HCT116 (cell line): ENCODE measurements at regions of chr13 and their contacts with region 1.

Region 1: DNA sequence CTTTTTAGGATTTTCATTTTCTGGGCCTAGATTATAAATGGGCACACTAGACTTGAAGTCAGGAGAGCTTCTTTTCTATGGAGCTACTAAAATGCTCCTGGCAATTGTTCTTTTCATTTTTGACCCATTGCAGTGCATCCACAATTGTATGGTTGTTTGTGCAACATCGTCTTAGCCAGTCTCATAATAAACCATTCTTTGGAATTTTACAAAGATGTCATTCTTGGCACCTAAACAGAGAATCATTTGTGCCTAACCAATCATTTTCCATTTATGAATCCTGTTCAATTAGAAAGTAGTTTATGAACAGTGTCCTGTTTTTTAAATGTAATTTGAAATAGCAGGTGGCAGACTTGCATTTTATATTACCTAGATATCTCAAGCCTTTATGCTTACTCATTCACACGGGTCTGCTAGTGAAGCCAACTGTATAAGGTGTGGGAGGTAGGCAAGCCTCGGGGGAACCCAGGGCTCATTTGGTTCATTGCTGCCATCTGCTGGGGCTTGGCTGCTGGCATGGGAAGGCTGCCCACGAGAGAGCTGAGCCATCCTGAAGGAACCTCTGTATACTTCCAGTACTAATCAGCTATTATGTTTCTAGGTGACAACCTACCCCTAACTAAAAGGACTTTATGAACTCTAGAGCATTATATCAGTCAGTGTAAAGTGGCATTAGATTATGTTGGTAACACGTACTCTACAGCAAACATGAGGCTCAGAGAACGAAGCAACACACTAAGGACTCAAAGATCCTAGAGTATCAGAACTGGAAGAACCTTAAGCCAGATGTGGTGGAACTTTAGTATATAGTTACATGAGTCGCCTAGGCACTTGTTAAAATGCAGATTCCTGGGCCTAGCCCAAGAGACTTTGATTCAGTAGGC is 60.0 kb downstream of the TPT1 start:
- DNase-seq: peak; percentile 79
- ATAC-seq: peak; percentile 97
- H3K4me3 ChIP-seq: no peak overlapping the region
- H3K27ac ChIP-seq: peak overlapping the region; percentile 58
- H3K4me1 ChIP-seq: peaks cover 46 to 58% of the 10 kb centered on the region in 2 experiments
- H3K27me3 ChIP-seq: no peaks in the 10 kb centered on the region
- CTCF ChIP-seq: peak; percentile 79 to 94 (median 92); a peak in 5 of 6 replicates
- POLR2A ChIP-seq: no peak
- RAD21 ChIP-seq: peak; percentile 98

Region 2: GRCh38 chr13:45047394-45048310 is 233.3 kb before region 1 on chr13:
- CTCF ChIA-PET with region 1: interaction called, 55 read pairs
- POLR2A ChIA-PET with region 1: interaction called, 3 read pairs
- RAD21 ChIA-PET with region 1: interaction called, 10 to 13 read pairs
- intact Hi-C with region 1: loop called (anchors 1 kb)
- DNase-seq: peak; percentile 68
- ATAC-seq: peak; percentile 95
- H3K4me3 ChIP-seq: no peak overlapping the region
- H3K27ac ChIP-seq: no peak overlapping the region
- H3K4me1 ChIP-seq: peaks cover 0 to 4% of the 10 kb centered on the region in 2 experiments; a peak in 1 of 4 replicates
- H3K27me3 ChIP-seq: no peaks in the 10 kb centered on the region
- CTCF ChIP-seq: peak; percentile 87 to 95 (median 94)
- POLR2A ChIP-seq: no peak
- RAD21 ChIP-seq: peak; percentile 98

Region 3: DNA sequence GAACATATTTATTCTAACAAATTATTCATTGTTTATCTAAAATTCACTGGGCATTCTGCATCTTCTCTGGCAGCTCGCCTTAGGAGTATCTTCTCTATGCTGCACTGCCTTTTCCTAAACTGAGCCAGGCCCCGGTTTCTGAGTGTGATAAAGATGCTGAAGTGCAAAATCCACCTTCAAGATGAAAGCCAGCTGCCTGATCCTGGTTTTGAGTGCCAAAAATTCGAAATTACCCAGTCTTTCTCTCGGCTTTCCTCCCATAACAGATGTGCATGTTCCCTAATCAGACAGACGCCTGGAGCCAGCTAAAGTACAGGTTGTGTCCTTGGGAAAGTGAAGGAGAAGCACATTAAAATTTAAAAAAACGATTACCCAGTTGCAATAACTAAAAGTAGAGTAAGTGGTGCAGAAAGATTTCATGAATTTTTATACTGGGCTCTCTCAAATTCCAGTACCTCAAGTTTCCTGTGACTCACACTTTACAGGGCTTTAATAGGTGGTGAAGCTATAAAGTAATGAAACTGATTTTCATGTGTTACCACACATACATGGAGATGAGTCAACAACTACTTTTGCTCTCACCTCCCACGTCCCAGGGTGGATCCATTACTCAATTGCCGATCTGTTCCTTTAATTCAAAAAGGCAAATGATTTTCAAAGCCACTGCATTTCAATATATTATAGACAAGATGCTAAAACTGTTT is 225.6 kb before region 1 on chr13:
- CTCF ChIA-PET with region 1: interaction called, 23 read pairs
- POLR2A ChIA-PET with region 1: interaction called, 3 read pairs
- RAD21 ChIA-PET with region 1: interaction called, 3 to 8 read pairs
- intact Hi-C with region 1: loop called (anchors 2 kb)
- DNase-seq: peak; percentile 70
- ATAC-seq: peak; percentile 81
- H3K4me3 ChIP-seq: peak overlapping the region in 1 of 2 experiments; percentile 33; a peak in 3 of 4 replicates
- H3K27ac ChIP-seq: peak overlapping the region; percentile 69
- H3K4me1 ChIP-seq: peaks cover 18 to 44% of the 10 kb centered on the region in 2 experiments
- H3K27me3 ChIP-seq: no peaks in the 10 kb centered on the region
- CTCF ChIP-seq: no peak
- POLR2A ChIP-seq: no peak
- RAD21 ChIP-seq: 0 out of 2 replicates have a peak, but pooled peaks have one; percentile 23

Region 4: GRCh38 chr13:45109102-45109720 is 171.8 kb before region 1 on chr13:
- CTCF ChIA-PET with region 1: no interaction called
- POLR2A ChIA-PET with region 1: no interaction called
- RAD21 ChIA-PET with region 1: no interaction called
- intact Hi-C with region 1: no loop called
- DNase-seq: no peak
- ATAC-seq: peak; percentile 47; the same call in 1 of the 2 replicates
- H3K4me3 ChIP-seq: no peak overlapping the region
- H3K27ac ChIP-seq: no peak overlapping the region
- H3K4me1 ChIP-seq: no peaks in the 10 kb centered on the region
- H3K27me3 ChIP-seq: no peaks in the 10 kb centered on the region
- CTCF ChIP-seq: no peak
- POLR2A ChIP-seq: no peak
- RAD21 ChIP-seq: no peak

Region 5: DNA sequence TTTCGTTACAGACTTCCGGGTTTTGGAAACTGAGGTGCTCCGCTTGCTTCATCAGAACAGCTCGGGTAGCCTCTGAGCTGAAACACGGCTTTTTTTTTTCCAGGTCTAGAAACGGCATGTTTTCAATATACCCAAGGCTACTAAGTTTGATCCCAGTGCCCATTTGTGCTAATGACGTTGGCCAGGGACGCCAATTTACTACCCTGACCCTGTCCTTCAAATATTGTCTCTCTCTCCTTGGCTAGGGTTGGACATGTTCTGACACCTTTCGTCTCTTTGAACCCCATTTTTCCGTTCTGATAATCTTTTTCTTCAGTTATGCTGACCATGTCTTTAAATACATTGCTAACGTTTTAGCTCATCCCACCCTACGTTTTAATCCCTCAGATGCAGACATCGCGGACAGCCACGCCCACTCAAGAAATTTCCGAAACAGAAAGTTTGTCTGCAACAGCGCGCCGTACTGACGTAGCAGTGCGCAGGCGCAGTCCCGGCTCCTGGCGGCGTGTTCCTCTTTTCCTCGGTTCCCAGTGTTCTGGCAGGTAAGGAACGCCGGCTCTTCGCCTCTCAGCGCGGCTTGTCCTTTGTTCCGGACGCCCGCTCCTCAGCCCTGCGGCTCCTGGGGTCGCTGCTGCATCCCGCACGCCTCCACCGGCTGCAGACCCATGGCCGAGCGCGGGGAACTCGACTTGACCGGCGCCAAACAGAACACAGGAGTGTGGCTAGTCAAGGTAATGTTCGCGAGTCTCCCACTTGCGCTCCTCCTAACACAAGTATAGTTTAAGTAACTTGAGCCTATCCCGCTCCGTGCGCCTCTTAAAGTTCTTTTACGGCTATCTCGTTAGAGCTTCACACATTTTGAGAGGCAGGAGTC is 160.8 kb before region 1 on chr13 and contains the start of gene GTF2F2:
- CTCF ChIA-PET with region 1: no interaction called
- POLR2A ChIA-PET with region 1: no interaction called
- RAD21 ChIA-PET with region 1: no interaction called
- intact Hi-C with region 1: loop called (anchors 2 kb)
- DNase-seq: peak; percentile 77
- ATAC-seq: peak; percentile 79
- H3K4me3 ChIP-seq: peak within 1 kb of the TSS; percentile 84 to 96
- H3K27ac ChIP-seq: peak within 1 kb of the TSS; percentile 72
- H3K4me1 ChIP-seq: peaks cover 11 to 17% of the 10 kb centered on the region in 2 experiments
- H3K27me3 ChIP-seq: no peaks in the 10 kb centered on the region
- CTCF ChIP-seq: no peak
- POLR2A ChIP-seq: peak; percentile 68
- RAD21 ChIP-seq: peak; percentile 22; the same call in 1 of the 2 replicates
- total RNA-seq, gene GTF2F2: 40.1 TPM

Region 6: DNA sequence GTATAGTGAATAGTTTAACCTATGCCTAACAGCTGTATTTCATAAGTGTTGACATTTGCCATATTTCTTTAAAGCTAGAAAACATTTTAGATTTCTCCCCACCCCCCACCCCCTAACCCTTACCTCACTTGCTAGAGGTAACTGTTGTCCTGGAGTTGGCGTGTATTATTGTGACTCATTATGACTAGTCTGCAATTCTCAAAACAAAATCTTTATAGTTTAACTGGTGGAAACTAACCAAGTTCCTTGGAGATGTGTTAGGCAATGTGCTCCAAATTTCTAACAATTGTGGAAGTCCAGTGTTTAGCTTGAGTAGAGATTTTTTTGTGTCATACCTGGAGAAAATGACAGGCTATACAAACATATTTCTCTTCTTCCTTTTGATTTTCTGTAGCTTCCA is 118.2 kb before region 1 on chr13:
- CTCF ChIA-PET with region 1: no interaction called
- POLR2A ChIA-PET with region 1: no interaction called
- RAD21 ChIA-PET with region 1: interaction called in 1 of 2 experiments, 3 read pairs
- intact Hi-C with region 1: loop called (anchors 10 kb)
- DNase-seq: peak; percentile 76
- ATAC-seq: peak; percentile 86
- H3K4me3 ChIP-seq: peak overlapping the region in 1 of 2 experiments; percentile 33; a peak in 1 of 4 replicates
- H3K27ac ChIP-seq: peak overlapping the region; percentile 66
- H3K4me1 ChIP-seq: peaks cover 38 to 53% of the 10 kb centered on the region in 2 experiments
- H3K27me3 ChIP-seq: no peaks in the 10 kb centered on the region
- CTCF ChIP-seq: no peak
- POLR2A ChIP-seq: no peak
- RAD21 ChIP-seq: peak; percentile 17; the same call in 1 of the 2 replicates

Region 7: DNA sequence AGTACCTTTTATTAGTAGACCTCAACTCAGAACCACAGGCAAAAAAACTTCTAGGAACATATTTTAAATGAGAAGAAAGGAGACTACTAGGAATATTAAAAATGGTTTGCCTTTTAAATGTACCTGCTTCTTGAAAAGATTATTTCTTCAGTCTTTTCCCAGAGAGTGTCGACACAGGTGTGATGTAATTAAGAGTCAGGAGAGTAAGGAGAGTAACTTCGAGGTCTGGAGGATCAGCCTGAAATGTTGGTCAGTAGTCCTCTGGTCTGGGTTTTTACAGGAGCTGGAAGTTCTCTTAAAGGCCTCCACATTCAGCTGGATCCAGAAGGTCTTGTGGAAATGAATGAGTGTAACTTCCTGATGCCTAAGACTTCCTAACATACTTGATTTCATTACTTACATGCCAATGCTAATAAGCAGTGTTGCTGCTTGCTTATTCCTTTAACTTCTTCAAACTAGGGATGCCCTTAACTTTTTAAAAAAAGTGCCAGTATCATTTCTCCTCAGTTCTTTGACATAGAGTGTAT is 80.2 kb before region 1 on chr13 and contains the start of gene KCTD4:
- CTCF ChIA-PET with region 1: no interaction called
- POLR2A ChIA-PET with region 1: no interaction called
- RAD21 ChIA-PET with region 1: no interaction called
- intact Hi-C with region 1: no loop called
- DNase-seq: no peak
- ATAC-seq: no peak
- H3K4me3 ChIP-seq: no peak within 1 kb of the TSS
- H3K27ac ChIP-seq: no peak within 1 kb of the TSS
- H3K4me1 ChIP-seq: peaks cover 2 to 38% of the 10 kb centered on the region in 2 experiments; a peak in 3 of 4 replicates
- H3K27me3 ChIP-seq: no peaks in the 10 kb centered on the region
- CTCF ChIP-seq: no peak
- POLR2A ChIP-seq: no peak
- RAD21 ChIP-seq: no peak
- total RNA-seq, gene KCTD4: not detected

Region 8: GRCh38 chr13:45292176-45292575 is 11.2 kb after region 1 on chr13:
- CTCF ChIA-PET with region 1: interaction called, 15 read pairs
- POLR2A ChIA-PET with region 1: no interaction called
- RAD21 ChIA-PET with region 1: no interaction called
- intact Hi-C with region 1: no loop called
- DNase-seq: peak; percentile 70
- ATAC-seq: peak; percentile 90
- H3K4me3 ChIP-seq: no peak overlapping the region
- H3K27ac ChIP-seq: peak overlapping the region; percentile 63
- H3K4me1 ChIP-seq: peaks cover 20 to 28% of the 10 kb centered on the region in 2 experiments
- H3K27me3 ChIP-seq: no peaks in the 10 kb centered on the region
- CTCF ChIP-seq: no peak
- POLR2A ChIP-seq: no peak
- RAD21 ChIP-seq: no peak

Region 9: DNA sequence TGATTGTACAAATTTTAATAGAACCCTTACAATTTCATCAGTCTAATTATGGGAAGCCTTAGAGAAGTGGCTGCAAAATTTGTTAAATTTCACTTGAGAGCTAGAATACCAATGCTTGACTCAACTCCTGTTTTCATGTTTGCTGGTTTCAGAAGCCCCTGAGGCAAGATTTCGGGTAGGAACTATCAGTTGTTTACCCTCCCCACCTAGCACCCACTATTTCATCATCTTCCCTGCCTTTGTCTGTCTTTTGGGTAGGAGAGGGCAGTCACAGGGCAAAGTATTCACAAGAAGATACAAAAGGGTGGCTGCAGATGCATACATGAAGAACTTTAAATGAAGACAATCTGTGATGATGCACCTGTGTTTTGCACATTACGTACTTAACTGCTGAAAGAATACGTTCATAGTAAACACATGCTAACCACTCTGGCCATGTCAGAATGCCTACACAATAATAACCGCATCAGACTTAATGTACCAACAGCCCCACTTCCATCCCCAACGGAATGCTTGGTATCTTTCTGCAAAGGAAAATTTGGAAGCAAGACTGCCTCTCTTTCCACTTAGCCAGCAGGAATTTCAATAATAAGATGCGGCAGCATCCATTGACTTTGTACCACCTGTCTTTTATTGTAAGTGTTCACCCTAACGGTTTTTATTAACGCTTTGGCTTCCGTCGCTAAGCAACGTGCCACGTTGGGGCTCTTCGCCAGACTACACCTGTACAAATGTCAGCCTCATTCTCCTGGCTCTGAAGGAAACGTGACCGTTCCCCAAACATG is 29.5 kb after region 1 on chr13:
- CTCF ChIA-PET with region 1: interaction called, 4 read pairs
- POLR2A ChIA-PET with region 1: no interaction called
- RAD21 ChIA-PET with region 1: interaction called in 1 of 2 experiments, 4 read pairs
- intact Hi-C with region 1: loop called (anchors 1 kb)
- DNase-seq: no peak
- ATAC-seq: peak; percentile 35; the same call in 1 of the 2 replicates
- H3K4me3 ChIP-seq: no peak overlapping the region
- H3K27ac ChIP-seq: no peak overlapping the region
- H3K4me1 ChIP-seq: peaks cover 2 to 16% of the 10 kb centered on the region in 2 experiments; a peak in 3 of 4 replicates
- H3K27me3 ChIP-seq: no peaks in the 10 kb centered on the region
- CTCF ChIP-seq: no peak
- POLR2A ChIP-seq: no peak
- RAD21 ChIP-seq: no peak